Transverse colon (tissue), 4 donors: ENCODE measurements at regions of chr1 and their contacts with region 1.

Region 1: DNA sequence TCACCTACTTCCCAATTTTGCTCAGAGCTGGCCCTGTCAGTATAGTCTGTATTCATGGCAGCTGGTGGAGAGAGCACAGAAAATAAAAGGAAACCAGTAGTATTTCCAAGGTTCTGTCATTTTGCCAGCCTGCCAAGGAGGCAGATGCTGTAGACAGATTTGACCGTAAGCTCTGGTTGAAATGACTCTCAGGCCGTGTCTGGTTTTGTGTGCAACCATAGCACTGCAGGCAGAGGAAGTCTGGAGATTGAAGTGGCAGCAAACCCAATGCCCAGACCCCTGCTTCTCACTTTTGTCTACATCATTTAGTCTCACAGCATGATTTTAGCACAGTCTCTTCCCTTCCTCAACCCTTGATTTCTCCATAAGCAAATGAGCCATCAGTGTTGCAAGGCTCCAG is 291.7 kb downstream of the PAPPA2 start:
- DNase-seq: no peak
- H3K4me3 ChIP-seq: no peak overlapping the region
- H3K27ac ChIP-seq: no peak overlapping the region
- H3K4me1 ChIP-seq: no peaks in the 10 kb centered on the region
- H3K27me3 ChIP-seq: no peaks in the 10 kb centered on the region
- CTCF ChIP-seq: no peak
- EP300 ChIP-seq: no peak
- POLR2A ChIP-seq: no peak

Region 2: GRCh38 chr1:176733661-176734060 is 21.0 kb before region 1 on chr1:
- in situ Hi-C with region 1: no loop called
- intact Hi-C with region 1: no loop called
- DNase-seq: no peak
- H3K4me3 ChIP-seq: no peak overlapping the region
- H3K27ac ChIP-seq: no peak overlapping the region
- H3K4me1 ChIP-seq: no peaks in the 10 kb centered on the region
- H3K27me3 ChIP-seq: no peaks in the 10 kb centered on the region
- CTCF ChIP-seq: no peak
- EP300 ChIP-seq: no peak
- POLR2A ChIP-seq: no peak

Region 3: GRCh38 chr1:176959191-176959820 is 204.6 kb after region 1 on chr1:
- in situ Hi-C with region 1: no loop called
- intact Hi-C with region 1: no loop called
- DNase-seq: no peak
- H3K4me3 ChIP-seq: no peak overlapping the region
- H3K27ac ChIP-seq: no peak overlapping the region
- H3K4me1 ChIP-seq: no peaks in the 10 kb centered on the region
- H3K27me3 ChIP-seq: no peaks in the 10 kb centered on the region
- CTCF ChIP-seq: no peak
- EP300 ChIP-seq: no peak
- POLR2A ChIP-seq: no peak

Region 4: GRCh38 chr1:177825276-177825901 is 1070.7 kb after region 1 on chr1:
- in situ Hi-C with region 1: no loop called
- intact Hi-C with region 1: loop called (anchors 5 kb)
- DNase-seq: no peak
- H3K4me3 ChIP-seq: no peak overlapping the region
- H3K27ac ChIP-seq: no peak overlapping the region
- H3K4me1 ChIP-seq: no peaks in the 10 kb centered on the region
- H3K27me3 ChIP-seq: no peaks in the 10 kb centered on the region
- CTCF ChIP-seq: no peak
- EP300 ChIP-seq: no peak
- POLR2A ChIP-seq: no peak